ENCODE measurements at regions of chr12 and their contacts with region 1.

Region 1: GRCh38 chr12:120710031-120710804 is at the start of gene UNC119B:
- DNase-seq: peak; percentile 77
- H3K4me3 ChIP-seq: peak within 1 kb of the TSS; percentile 93
- H3K27ac ChIP-seq: peak within 1 kb of the TSS; percentile 83
- H3K4me1 ChIP-seq: peaks cover 12% of the 10 kb centered on the region
- H3K27me3 ChIP-seq: no peaks in the 10 kb centered on the region
- CTCF ChIP-seq: no peak
- total RNA-seq, gene UNC119B: 22.7 to 28.3 TPM

Region 2: DNA sequence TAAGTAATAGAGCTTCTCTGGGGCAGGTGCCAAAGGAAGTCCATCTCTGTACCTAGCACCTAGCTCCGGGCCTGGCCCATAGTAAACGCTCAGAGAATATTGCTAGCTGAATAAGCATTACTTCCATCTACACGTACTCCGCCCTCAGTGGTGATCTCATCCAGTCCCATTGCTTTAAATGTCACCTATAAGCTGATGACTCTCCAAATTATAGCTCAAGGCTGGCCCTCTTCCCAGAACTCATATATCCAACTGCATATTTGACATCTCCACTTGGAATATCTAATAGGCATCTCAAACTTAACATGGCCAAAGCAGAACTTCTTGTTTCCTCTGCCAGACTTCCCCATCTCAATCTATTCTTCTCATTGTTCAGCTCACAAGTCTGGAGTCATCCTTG is 221.2 kb before region 1 on chr12:
- intact Hi-C with region 1: no loop called
- DNase-seq: peak; percentile 48
- H3K4me3 ChIP-seq: no peak overlapping the region
- H3K27ac ChIP-seq: no peak overlapping the region
- H3K4me1 ChIP-seq: no peaks in the 10 kb centered on the region
- H3K27me3 ChIP-seq: no peaks in the 10 kb centered on the region
- CTCF ChIP-seq: no peak

Region 3: DNA sequence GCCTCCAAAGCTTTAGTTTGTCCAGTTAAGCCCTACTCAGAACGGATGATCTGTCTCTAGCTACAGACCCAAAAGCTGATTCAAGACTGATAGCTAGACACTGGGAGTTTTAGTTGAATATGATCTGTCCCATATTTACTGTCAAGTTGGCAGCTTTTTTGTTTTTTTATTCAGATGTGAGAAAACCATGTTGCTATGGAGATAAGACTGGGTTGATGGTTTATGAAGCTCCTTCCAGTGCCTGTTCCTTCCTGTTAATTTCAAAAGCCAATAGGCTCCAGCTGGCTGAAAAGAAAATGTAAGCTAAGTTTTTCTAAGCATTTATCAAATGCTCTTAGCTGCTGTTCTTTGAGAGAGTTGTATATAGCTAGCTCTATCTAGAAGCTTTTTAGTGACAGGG is 209.6 kb before region 1 on chr12:
- intact Hi-C with region 1: no loop called
- DNase-seq: no peak
- H3K4me3 ChIP-seq: no peak overlapping the region
- H3K27ac ChIP-seq: no peak overlapping the region
- H3K4me1 ChIP-seq: no peaks in the 10 kb centered on the region
- H3K27me3 ChIP-seq: no peaks in the 10 kb centered on the region
- CTCF ChIP-seq: no peak

Region 4: GRCh38 chr12:120649442-120650232 is 60.6 kb before region 1 on chr12:
- intact Hi-C with region 1: loop called (anchors 1 kb)
- DNase-seq: no peak
- H3K4me3 ChIP-seq: no peak overlapping the region
- H3K27ac ChIP-seq: peak overlapping the region; percentile 54
- H3K4me1 ChIP-seq: no peaks in the 10 kb centered on the region
- H3K27me3 ChIP-seq: peaks cover 3% of the 10 kb centered on the region
- CTCF ChIP-seq: peak; percentile 21

Region 5: GRCh38 chr12:120692524-120693033 is 17.6 kb before region 1 on chr12:
- intact Hi-C with region 1: loop called (anchors 2 kb)
- DNase-seq: no peak
- H3K4me3 ChIP-seq: no peak overlapping the region
- H3K27ac ChIP-seq: peak overlapping the region; percentile 89
- H3K4me1 ChIP-seq: peaks cover 18% of the 10 kb centered on the region
- H3K27me3 ChIP-seq: no peaks in the 10 kb centered on the region
- CTCF ChIP-seq: no peak

Measured in colonic mucosa (tissue), 4 donors.